Heart right ventricle (tissue), 16 donors: ENCODE measurements at regions of chr14 and their contacts with region 1.

Region 1: DNA sequence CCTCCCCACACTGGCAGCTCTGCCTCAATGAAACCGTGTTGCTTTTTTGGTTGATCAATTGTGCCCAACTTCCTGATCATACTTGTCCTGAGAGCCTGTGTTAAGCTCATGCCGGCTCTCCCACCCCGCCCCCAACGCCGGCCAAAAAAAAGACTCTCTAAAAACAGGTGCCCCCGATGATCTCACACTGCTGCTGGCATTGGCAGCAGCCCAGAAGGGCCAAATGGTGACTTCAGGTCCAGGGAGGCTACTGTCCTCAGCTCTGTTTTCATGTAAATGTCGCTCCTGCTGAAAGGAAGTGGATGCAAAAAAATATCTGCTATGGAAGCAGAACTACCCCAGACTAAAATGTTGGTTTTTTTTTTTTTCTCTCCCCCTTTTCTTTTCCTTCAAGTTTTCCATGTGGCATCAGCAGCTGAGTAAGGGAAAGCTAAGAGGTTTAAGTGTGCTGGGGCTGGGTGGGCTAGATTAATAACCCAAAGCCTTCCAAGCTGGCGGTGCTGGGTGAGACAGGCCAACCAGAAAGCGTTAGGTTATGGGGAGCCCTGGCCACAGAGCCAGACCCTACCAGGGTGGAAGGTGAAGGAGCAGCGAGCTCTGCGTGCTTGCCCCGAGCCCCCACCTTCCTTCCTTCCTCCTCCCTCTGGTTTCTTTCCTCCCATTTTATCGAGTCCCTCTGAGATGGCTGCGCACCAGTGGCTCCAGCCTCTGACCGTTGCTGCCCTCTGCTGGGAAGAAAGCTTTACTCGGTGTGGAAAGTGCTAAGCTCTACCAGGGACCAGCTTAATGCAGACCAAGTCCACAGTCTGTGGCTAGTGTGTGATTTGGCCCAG is 396.1 kb downstream of the NRXN3 start:
- DNase-seq: peak; percentile 58 to 79
- ATAC-seq: peak; percentile 84 to 97 (median 92)
- H3K4me3 ChIP-seq: peak overlapping the region in 8 of 10 donors; percentile 12 to 50 (median 42)
- H3K27ac ChIP-seq: peak overlapping the region in 1 of 10 donors; percentile 34
- H3K4me1 ChIP-seq: peaks cover 0 to 17% (median 6%) of the 10 kb centered on the region in 9 donors
- H3K27me3 ChIP-seq: peaks cover 0 to 3% (median 0%) of the 10 kb centered on the region in 7 donors
- CTCF ChIP-seq: peak; percentile 41 to 84 (median 78)

Region 2: GRCh38 chr14:77654001-77654441 is 912.2 kb before region 1 on chr14:
- intact Hi-C with region 1: loop called in 3 of 10 experiments (anchors 10 kb)
- DNase-seq: no peak
- ATAC-seq: no peak
- H3K4me3 ChIP-seq: no peak overlapping the region
- H3K27ac ChIP-seq: peak overlapping the region in 1 of 10 donors; percentile 1
- H3K4me1 ChIP-seq: peaks cover 0 to 27% (median 3%) of the 10 kb centered on the region in 9 donors
- H3K27me3 ChIP-seq: no peaks in the 10 kb centered on the region
- CTCF ChIP-seq: no peak

Region 3: GRCh38 chr14:77849711-77850110 is 716.5 kb before region 1 on chr14:
- intact Hi-C with region 1: loop called in 1 of 10 experiments (anchors 10 kb)
- DNase-seq: no peak
- ATAC-seq: no peak
- H3K4me3 ChIP-seq: no peak overlapping the region
- H3K27ac ChIP-seq: no peak overlapping the region
- H3K4me1 ChIP-seq: peaks cover 0 to 2% (median 0%) of the 10 kb centered on the region in 9 donors
- H3K27me3 ChIP-seq: no peaks in the 10 kb centered on the region
- CTCF ChIP-seq: no peak

Region 4: GRCh38 chr14:77862154-77862786 is 704.0 kb before region 1 on chr14:
- intact Hi-C with region 1: loop called in 9 of 10 experiments (anchors 1 to 10 kb)
- DNase-seq: peak; percentile 75 to 82
- ATAC-seq: peak; percentile 66 to 84 (median 78)
- H3K4me3 ChIP-seq: no peak overlapping the region
- H3K27ac ChIP-seq: no peak overlapping the region
- H3K4me1 ChIP-seq: peaks cover 0 to 5% (median 0%) of the 10 kb centered on the region in 9 donors
- H3K27me3 ChIP-seq: no peaks in the 10 kb centered on the region
- CTCF ChIP-seq: peak; percentile 88 to 99 (median 97)

Region 5: DNA sequence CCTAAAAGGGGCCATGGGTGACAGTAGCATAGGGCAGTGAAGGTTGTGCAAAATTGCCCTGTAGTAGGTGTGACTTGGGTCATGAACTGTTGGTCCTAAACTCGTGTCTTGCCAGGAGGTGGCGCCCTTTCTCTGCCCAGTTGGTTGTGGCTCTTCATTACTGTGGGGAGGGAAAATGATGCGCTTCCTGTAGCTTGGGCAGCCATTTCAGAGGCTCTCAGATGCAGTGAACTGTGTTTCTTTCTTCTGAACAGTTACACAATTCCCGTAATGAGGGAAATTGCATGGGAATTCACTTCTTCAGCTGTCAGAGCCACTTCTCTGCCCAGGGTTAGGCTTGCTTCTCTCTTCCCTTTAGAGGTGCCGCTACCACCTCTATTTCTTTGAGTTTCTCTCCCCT is 544.2 kb before region 1 on chr14:
- intact Hi-C with region 1: loop called in 9 of 10 experiments (anchors 2 to 10 kb)
- DNase-seq: peak; percentile 42 to 54
- ATAC-seq: peak in 2 of 8 donors; percentile 49 to 67
- H3K4me3 ChIP-seq: no peak overlapping the region
- H3K27ac ChIP-seq: no peak overlapping the region
- H3K4me1 ChIP-seq: no peaks in the 10 kb centered on the region
- H3K27me3 ChIP-seq: peaks cover 0 to 9% (median 0%) of the 10 kb centered on the region in 7 donors
- CTCF ChIP-seq: peak in 8 of 9 donors; percentile 43 to 61 (median 58)

Region 6: DNA sequence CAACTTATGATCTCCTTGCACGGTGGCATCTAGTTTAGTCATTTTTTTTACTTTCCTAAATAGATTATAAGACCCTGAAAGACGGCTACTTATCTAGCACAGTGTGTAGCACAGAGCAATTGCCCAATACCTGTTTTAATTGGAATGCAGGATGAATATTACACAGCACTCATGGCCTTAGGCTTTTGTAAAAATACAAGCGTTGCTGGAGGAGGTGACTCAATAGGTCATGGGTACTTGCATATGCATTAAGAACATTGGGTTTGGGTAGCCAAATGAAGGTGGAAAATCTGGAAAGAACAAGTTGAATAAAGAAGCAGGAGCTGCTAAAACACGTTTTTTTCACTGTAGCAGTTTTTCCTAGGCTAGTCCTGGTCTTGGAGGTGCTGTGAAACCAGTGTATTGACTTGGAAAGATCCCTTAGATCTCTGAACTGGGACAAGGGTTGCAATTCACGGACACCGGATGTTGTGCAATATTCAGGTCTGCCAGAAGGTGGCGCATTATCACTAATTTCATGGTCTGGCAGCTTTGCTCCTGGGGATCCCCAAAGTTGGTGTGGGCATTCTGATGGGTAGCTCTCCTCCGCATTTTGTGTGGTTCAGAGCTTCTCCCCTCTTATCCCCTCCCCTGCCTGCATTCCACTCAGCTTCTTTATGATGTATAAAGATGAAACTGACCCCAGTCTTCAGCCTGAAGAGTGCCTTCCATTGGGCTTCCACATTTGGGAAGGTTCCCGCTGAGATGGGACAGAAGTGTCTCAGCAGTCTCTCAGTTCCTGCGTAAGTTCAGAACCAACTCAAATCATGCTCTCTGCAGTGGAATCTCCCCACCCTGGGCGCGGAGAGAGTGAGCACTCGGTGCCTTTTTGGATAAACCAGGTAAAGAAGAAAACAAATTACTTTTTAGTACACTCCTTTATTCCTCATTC is 117.8 kb before region 1 on chr14:
- intact Hi-C with region 1: loop called in 9 of 10 experiments (anchors 1 to 5 kb)
- DNase-seq: peak in 1 of 2 donors; percentile 36
- ATAC-seq: no peak
- H3K4me3 ChIP-seq: no peak overlapping the region
- H3K27ac ChIP-seq: no peak overlapping the region
- H3K4me1 ChIP-seq: peaks cover 0 to 5% (median 0%) of the 10 kb centered on the region in 9 donors
- H3K27me3 ChIP-seq: peaks cover 0 to 8% (median 0%) of the 10 kb centered on the region in 7 donors
- CTCF ChIP-seq: peak; percentile 29 to 67 (median 60)